ENCODE measurements at regions of chr4 and their contacts with region 1.

Region 1: DNA sequence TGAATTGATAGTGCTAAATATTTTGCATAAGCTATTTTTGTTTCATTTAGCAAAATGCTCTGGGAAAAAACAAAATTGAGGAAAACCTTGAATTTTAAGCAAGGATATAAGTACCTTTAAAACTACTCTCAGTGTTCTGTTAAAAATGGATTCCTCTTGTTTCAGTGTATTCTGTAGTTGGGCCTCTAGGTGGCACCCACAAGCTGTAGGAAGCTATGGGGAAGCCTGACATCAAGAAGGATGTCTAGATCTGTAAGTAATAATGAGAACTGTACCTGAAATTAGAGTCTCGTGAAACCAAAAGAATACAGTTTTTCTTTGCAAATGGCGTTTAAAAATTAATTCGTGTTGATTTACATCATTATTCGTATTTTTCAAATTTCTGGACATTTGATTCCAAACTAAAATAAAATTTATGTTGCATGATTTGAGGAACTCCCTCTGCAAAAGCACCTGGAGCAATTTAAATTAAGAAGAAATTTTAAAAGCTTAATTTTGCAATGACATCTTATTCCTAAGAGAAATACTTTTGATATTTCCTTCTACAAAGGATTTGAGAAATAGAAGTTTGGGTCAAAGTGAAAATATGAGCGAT is 51.2 kb downstream of the TMPRSS11E start:
- DNase-seq: peak in 1 of 2 donors; percentile 13
- ATAC-seq: no peak
- H3K4me3 ChIP-seq: no peak overlapping the region
- H3K27ac ChIP-seq: no peak overlapping the region
- H3K4me1 ChIP-seq: no peaks in the 10 kb centered on the region
- H3K27me3 ChIP-seq: no peaks in the 10 kb centered on the region
- CTCF ChIP-seq: peak; percentile 13 to 66 (median 41)
- POLR2A ChIP-seq: no peak

Region 2: GRCh38 chr4:67465032-67465762 is 1033.3 kb before region 1 on chr4:
- in situ Hi-C with region 1: no loop called
- intact Hi-C with region 1: no loop called
- DNase-seq: no peak
- ATAC-seq: peak; percentile 54 to 65
- H3K4me3 ChIP-seq: no peak overlapping the region
- H3K27ac ChIP-seq: peak overlapping the region in 1 of 4 donors; percentile 15
- H3K4me1 ChIP-seq: peaks cover 3 to 5% of the 10 kb centered on the region in 2 donors
- H3K27me3 ChIP-seq: no peaks in the 10 kb centered on the region
- CTCF ChIP-seq: no peak
- POLR2A ChIP-seq: no peak

Region 3: DNA sequence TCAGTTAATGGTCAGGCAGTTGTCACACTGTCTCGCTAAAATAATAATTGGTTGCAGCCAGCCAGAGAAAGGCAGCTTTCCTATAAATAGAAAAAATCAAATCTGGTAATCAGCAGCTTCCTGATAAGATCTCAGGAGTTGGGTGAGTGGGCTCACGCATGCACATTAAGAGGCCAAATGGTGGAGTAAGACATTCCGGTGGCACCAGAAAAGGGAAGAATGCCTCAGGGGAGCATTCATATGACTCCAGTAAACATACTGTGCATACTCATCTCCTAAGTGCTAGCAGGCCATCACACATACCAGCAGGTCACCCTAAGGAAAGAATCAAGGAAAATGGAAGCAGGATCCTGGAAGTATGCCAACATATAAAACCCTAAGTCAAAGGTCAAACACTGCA is 131.9 kb after region 1 on chr4:
- in situ Hi-C with region 1: loop called in 3 of 4 experiments (anchors 5 to 10 kb)
- intact Hi-C with region 1: loop called (anchors 5 kb)
- DNase-seq: no peak
- ATAC-seq: no peak
- H3K4me3 ChIP-seq: no peak overlapping the region
- H3K27ac ChIP-seq: no peak overlapping the region
- H3K4me1 ChIP-seq: no peaks in the 10 kb centered on the region
- H3K27me3 ChIP-seq: no peaks in the 10 kb centered on the region
- CTCF ChIP-seq: no peak
- POLR2A ChIP-seq: no peak

Measured in gastrocnemius medialis (tissue), 4 donors.